ENCODE measurements at regions of chr2 and their contacts with region 1.

Region 1: GRCh38 chr2:44120428-44120827 is 48.2 kb upstream of the PPM1B start:
- DNase-seq: peak; percentile 62
- H3K4me3 Mint-ChIP-seq: no peak overlapping the region
- H3K27ac Mint-ChIP-seq: peak overlapping the region; percentile 4
- H3K4me1 Mint-ChIP-seq: peaks cover 32% of the 10 kb centered on the region
- H3K27me3 Mint-ChIP-seq: no peaks in the 10 kb centered on the region

Region 2: DNA sequence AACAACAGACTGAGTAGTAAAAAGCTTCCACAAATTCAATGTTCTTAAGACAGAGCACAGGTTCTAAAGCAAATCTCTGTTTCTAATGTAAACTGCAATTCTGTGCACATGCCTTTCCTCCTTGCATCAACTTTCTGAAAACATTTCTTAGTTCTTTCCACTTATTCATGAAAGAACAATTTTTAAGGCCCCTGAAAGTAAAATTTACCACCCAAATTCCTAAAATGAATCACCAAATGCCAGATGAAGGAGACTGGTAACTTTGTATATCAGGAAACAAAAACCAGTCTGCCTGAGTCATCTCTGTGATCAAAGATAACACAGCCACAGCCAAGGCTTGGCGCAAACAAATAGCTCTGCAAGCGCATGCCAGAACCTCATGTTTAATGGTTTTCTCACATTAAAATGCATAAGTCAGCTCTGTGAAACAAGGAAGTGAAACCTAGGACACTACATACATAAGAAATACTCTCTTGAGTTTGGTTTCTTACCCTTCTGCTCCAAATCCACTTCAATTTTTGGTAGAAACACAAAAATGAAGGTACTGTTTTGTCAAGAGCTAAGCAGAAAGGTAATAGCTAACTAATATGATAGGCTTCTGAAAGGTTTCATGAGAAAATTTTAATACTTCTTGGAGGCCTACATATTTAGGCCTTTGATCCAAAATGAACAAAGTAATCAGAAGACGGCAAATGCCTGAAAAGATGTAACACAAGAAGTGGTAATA is 694.0 kb before region 1 on chr2:
- CTCF ChIA-PET with region 1: no interaction called
- intact Hi-C with region 1: loop called (anchors 1 kb)
- DNase-seq: peak; percentile 80
- H3K4me3 Mint-ChIP-seq: no peak overlapping the region
- H3K27ac Mint-ChIP-seq: peak overlapping the region; percentile 14
- H3K4me1 Mint-ChIP-seq: peaks cover 31% of the 10 kb centered on the region
- H3K27me3 Mint-ChIP-seq: no peaks in the 10 kb centered on the region

Region 3: DNA sequence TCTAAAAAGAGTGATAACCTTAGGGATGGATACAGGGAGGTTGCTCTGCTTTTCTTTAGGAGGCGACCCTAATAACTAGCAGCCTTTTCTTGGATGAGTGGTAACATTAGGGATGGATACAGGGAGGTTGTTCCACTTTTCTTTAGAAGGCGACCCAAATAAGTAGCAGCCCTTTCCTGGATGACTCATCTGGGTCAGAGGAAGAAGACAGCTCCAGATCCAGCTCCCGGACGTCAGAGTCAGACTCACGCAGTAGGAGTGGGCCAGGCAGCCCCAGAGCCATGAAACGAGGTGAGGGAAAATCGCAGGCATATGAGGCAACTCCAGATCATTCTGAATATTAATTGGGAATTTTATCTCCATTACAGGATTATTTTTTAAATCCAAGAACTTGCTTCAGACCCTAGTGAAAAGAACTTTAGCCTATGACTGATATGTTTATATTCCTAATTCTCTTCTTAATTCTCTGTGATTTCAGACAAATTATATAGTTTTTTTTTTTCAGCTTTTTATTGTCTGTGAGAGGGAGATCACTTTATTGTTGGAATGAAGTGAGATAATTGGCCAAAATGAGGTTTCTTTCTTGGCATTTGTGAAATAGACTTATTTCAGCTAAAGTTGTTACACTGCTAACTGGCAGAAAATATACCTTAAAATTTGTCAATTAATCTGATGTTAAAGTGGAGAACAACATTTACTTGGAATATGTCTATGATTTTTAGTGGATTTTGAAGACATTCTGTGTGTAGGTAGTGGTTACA is 413.0 kb before region 1 on chr2:
- CTCF ChIA-PET with region 1: no interaction called
- intact Hi-C with region 1: no loop called
- DNase-seq: no peak
- H3K4me3 Mint-ChIP-seq: no peak overlapping the region
- H3K27ac Mint-ChIP-seq: no peak overlapping the region
- H3K4me1 Mint-ChIP-seq: no peaks in the 10 kb centered on the region
- H3K27me3 Mint-ChIP-seq: peaks cover 6% of the 10 kb centered on the region

Region 4: DNA sequence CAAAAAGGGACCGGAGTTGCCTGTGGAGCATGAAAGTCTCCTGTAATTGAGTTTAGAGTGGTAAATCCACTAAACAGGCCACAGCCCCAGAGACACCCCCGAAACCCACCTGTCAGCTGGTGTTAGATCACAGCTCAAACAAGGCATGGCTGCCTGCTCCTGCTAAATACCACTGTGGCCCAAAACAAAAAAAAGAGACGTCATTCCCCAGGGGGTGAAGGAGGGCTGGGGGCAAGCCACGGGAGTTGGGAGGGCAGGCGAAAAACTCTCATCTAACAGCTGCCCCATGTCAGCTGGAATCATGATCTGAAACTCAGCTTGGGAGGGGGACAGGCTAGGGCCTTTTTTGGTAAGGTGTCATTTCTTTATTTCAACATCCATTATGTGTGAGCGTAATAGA is 82.2 kb before region 1 on chr2:
- CTCF ChIA-PET with region 1: no interaction called
- intact Hi-C with region 1: no loop called
- DNase-seq: no peak
- H3K4me3 Mint-ChIP-seq: no peak overlapping the region
- H3K27ac Mint-ChIP-seq: no peak overlapping the region
- H3K4me1 Mint-ChIP-seq: no peaks in the 10 kb centered on the region
- H3K27me3 Mint-ChIP-seq: no peaks in the 10 kb centered on the region

Region 5: GRCh38 chr2:44237221-44237620 is 116.8 kb after region 1 on chr2:
- CTCF ChIA-PET with region 1: no interaction called
- intact Hi-C with region 1: loop called (anchors 1 kb)
- DNase-seq: peak; percentile 40
- H3K4me3 Mint-ChIP-seq: no peak overlapping the region
- H3K27ac Mint-ChIP-seq: no peak overlapping the region
- H3K4me1 Mint-ChIP-seq: peaks cover 32% of the 10 kb centered on the region
- H3K27me3 Mint-ChIP-seq: no peaks in the 10 kb centered on the region

Region 6: GRCh38 chr2:44367591-44367990 is 247.2 kb after region 1 on chr2:
- CTCF ChIA-PET with region 1: no interaction called
- intact Hi-C with region 1: loop called (anchors 1 kb)
- DNase-seq: no peak
- H3K4me3 Mint-ChIP-seq: no peak overlapping the region
- H3K27ac Mint-ChIP-seq: no peak overlapping the region
- H3K4me1 Mint-ChIP-seq: peaks cover 44% of the 10 kb centered on the region
- H3K27me3 Mint-ChIP-seq: no peaks in the 10 kb centered on the region

Region 7: DNA sequence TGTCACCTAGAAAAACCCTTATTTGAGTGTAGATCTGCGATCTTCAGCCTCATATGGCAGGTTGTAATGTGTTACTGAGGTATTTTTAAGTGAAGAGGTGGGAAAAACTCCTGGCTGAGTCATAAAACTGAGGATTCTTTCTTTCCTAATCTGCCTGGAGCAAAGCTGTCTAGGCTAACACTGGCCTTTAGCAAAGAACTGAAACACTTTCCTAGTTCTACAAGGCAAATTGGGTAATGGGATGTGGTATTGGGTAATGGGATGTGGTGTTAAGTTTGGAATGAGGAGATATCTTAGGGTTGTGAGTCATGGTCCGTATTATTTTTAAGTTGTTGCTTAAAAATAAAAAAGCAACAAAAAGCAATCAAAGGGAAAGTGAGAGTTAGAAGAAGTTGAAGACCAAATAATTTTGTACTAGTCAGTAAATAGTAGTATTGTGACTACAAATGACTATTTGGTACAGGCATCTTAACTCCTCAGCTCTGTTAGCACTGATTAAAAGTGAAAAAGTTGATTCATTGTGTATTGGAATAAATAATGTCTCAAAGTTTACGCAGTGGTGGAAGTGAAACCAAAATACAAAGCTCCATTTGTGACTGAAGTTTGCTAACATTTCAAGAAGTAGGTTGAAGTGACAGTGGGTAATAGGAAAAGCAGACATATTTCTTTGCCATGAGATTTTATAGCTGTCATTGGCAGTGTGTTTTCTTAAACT is 458.1 kb after region 1 on chr2:
- CTCF ChIA-PET with region 1: no interaction called
- intact Hi-C with region 1: loop called (anchors 5 kb)
- DNase-seq: no peak
- H3K4me3 Mint-ChIP-seq: no peak overlapping the region
- H3K27ac Mint-ChIP-seq: peak overlapping the region; percentile 15
- H3K4me1 Mint-ChIP-seq: peaks cover 37% of the 10 kb centered on the region
- H3K27me3 Mint-ChIP-seq: no peaks in the 10 kb centered on the region